Activated CD8-positive, alpha-beta T cell treated with anti-CD3 and anti-CD28 coated beads, Interleukin-2, amount 10 ng/mL, durations not matched to agents 7 days and 5 days (primary cell): ENCODE measurements at regions of chr17 and their contacts with region 1.

Region 1: DNA sequence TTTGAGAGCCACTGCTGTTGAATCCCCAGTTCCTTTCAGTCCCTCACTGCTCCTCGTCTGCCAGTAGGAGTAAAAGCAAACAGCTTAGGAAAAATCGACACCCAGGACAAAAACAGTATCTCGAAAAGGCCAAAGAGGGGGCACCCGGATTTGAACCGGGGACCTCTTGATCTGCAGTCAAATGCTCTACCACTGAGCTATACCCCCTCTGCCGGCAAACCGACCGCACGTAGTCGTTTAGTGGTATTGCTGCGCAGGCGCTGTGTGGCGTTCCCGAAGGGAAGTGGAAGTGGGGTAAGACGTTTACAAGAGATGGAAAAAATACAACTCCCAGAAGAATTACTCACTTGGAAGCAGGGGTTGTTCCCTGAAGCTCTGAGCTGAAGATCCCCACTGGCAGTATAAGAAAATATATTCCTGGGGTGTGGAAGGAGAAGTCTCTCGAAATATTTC is 2.2 kb upstream of the PLXDC1 start:
- DNase-seq: peak; percentile 93
- ATAC-seq: peak; percentile 62
- H3K4me3 Mint-ChIP-seq: peak overlapping the region; percentile 98
- H3K27ac Mint-ChIP-seq: peak overlapping the region; percentile 93
- H3K4me1 Mint-ChIP-seq: peaks cover 35% of the 10 kb centered on the region
- H3K27me3 Mint-ChIP-seq: peaks cover 23% of the 10 kb centered on the region

Region 2: GRCh38 chr17:38853292-38854219 is 300.1 kb before region 1 on chr17 and contains the start of gene RPL23:
- CTCF ChIA-PET with region 1: interaction called, 8 read pairs
- POLR2A ChIA-PET with region 1: interaction called, 18 read pairs
- DNase-seq: peak; percentile 96
- ATAC-seq: peak; percentile 88
- H3K4me3 Mint-ChIP-seq: peak within 1 kb of the TSS; percentile 99
- H3K27ac Mint-ChIP-seq: peak within 1 kb of the TSS; percentile 99
- H3K4me1 Mint-ChIP-seq: peaks cover 39% of the 10 kb centered on the region
- H3K27me3 Mint-ChIP-seq: no peaks in the 10 kb centered on the region
- total RNA-seq, gene RPL23: 1,130 to 1,164 TPM

Region 3: GRCh38 chr17:38922538-38923297 is 230.9 kb before region 1 on chr17:
- CTCF ChIA-PET with region 1: interaction called, 14 read pairs
- POLR2A ChIA-PET with region 1: no interaction called
- DNase-seq: peak; percentile 26
- ATAC-seq: no peak
- H3K4me3 Mint-ChIP-seq: no peak overlapping the region
- H3K27ac Mint-ChIP-seq: peak overlapping the region; percentile 62
- H3K4me1 Mint-ChIP-seq: peaks cover 50% of the 10 kb centered on the region
- H3K27me3 Mint-ChIP-seq: no peaks in the 10 kb centered on the region

Region 4: GRCh38 chr17:38943607-38944006 is 210.0 kb before region 1 on chr17:
- CTCF ChIA-PET with region 1: no interaction called
- POLR2A ChIA-PET with region 1: no interaction called
- DNase-seq: no peak
- ATAC-seq: no peak
- H3K4me3 Mint-ChIP-seq: no peak overlapping the region
- H3K27ac Mint-ChIP-seq: no peak overlapping the region
- H3K4me1 Mint-ChIP-seq: peaks cover 8% of the 10 kb centered on the region
- H3K27me3 Mint-ChIP-seq: peaks cover 5% of the 10 kb centered on the region

Region 5: DNA sequence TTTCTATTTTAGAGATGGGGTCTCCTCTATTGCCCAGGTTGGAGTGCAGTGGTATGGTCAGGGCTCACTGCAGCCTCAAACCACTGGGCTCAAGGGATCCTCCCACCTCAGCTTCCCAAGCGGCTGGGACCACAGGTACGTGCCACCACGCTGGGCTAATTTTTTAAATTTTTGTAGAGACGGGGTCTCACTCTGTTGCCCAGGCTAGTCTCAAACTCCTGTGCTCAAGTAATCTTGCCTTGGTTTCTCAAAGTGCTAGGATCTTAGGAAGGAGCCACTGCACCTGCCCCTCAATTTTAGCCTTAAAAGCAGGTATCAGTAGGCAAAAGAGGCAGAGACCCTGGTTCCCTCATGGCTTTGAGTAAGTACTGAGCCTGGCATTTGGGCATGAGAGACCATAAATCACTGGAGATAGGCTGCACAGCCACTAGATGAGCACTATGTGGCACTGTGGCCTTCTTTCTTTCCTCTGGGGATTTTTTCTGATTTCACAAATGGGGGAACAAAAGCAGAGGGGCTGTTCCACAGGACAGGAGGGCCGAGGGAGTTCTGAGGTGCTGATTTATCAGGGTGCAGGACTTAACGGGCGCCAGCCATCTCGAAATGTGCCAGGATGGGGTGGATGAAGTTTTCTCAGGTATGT is 84.4 kb before region 1 on chr17:
- CTCF ChIA-PET with region 1: interaction called, 66 read pairs
- POLR2A ChIA-PET with region 1: interaction called, 4 read pairs
- DNase-seq: peak; percentile 59
- ATAC-seq: peak; percentile 79
- H3K4me3 Mint-ChIP-seq: no peak overlapping the region
- H3K27ac Mint-ChIP-seq: no peak overlapping the region
- H3K4me1 Mint-ChIP-seq: peaks cover 18% of the 10 kb centered on the region
- H3K27me3 Mint-ChIP-seq: peaks cover 4% of the 10 kb centered on the region

Region 6: DNA sequence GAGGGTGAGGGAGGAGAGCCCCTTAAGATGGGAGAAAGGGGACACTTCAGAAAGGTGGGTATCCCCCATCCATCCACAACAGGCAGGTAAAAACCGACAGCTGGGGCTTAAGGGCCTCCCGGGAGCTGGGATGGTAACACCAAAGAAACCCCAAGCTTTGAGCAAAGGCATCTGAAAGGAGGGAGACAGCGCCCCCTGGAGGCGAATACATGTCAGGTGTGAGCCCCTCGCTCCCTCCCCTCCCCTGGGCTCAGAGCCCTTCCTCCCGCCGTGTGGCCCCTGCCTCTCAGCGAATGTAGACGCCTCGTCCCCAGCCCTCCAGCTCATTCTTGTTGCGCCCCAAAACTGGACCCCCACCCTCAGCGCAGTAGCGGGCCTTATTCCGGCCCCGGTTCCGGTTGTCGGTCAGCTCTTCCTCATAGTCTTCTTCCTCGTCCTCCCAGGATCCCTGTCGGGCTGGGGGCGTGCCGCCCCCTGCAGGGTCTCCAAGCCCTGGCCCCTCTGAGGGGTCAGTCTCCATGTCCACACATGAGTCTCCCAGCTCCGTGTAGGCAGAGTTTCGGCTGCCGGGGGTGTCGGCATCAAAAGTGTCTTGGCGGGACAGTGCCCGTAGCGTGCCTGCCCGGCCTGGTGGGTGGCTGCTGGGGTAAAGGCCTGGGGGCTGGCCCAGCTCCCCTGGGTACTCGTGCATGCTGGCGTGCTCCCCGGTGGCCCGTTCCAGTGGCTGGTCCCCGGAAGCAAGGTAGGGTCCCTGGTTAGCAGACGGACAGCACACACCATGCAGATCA is 21.5 kb after region 1 on chr17:
- CTCF ChIA-PET with region 1: interaction called, 144 read pairs
- POLR2A ChIA-PET with region 1: interaction called, 4 read pairs
- DNase-seq: peak; percentile 87
- ATAC-seq: peak; percentile 87
- H3K4me3 Mint-ChIP-seq: no peak overlapping the region
- H3K27ac Mint-ChIP-seq: no peak overlapping the region
- H3K4me1 Mint-ChIP-seq: peaks cover 34% of the 10 kb centered on the region
- H3K27me3 Mint-ChIP-seq: no peaks in the 10 kb centered on the region

Region 7: GRCh38 chr17:39244600-39245570 is 91.3 kb after region 1 on chr17:
- CTCF ChIA-PET with region 1: interaction called, 15 read pairs
- POLR2A ChIA-PET with region 1: no interaction called
- DNase-seq: peak; percentile 91
- ATAC-seq: peak; percentile 93
- H3K4me3 Mint-ChIP-seq: no peak overlapping the region
- H3K27ac Mint-ChIP-seq: peak overlapping the region; percentile 66
- H3K4me1 Mint-ChIP-seq: peaks cover 16% of the 10 kb centered on the region
- H3K27me3 Mint-ChIP-seq: no peaks in the 10 kb centered on the region

Region 8: GRCh38 chr17:39508987-39509386 is 355.4 kb after region 1 on chr17:
- CTCF ChIA-PET with region 1: no interaction called
- POLR2A ChIA-PET with region 1: no interaction called
- DNase-seq: no peak
- ATAC-seq: no peak
- H3K4me3 Mint-ChIP-seq: no peak overlapping the region
- H3K27ac Mint-ChIP-seq: no peak overlapping the region
- H3K4me1 Mint-ChIP-seq: no peaks in the 10 kb centered on the region
- H3K27me3 Mint-ChIP-seq: no peaks in the 10 kb centered on the region